HEK293 (cell line): ENCODE measurements at regions of chr5 and their contacts with region 1.

Region 1: DNA sequence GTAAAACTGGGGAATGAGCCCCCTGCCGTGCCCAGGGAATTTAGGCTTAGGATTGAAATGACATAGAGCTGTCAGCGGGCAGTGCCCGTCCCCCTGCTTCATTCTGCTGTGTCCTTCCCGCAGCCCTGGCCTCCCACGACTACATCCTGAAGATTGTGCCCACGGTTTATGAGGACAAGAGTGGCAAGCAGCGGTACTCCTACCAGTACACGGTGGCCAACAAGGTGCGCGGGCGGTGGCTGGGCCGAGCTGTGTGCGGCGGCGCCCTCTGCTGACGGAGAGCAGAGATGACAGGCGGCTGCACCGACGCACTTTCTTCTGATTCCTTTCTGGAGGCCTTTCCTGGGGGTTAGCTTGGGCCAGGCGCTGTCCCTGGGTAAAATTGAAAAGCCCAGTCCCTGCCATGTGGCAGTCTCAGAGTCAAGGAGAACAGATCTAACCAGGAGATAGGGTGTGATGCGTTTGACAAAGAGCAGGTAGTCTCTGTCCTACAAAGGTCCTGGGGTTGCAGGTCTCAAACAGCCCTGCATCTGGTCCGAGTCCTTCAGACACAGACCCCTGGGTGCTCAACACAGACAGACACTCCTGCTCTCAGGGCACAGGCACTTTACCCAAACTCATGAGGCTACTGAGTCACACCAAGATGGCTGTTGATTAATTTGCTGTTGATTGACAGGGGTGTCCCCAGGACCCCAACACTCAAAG is 26.8 kb upstream of the RPL26L1 start:
- H3K4me3 ChIP-seq: no peak overlapping the region
- H3K27ac ChIP-seq: no peak overlapping the region
- H3K4me1 ChIP-seq: no peaks in the 10 kb centered on the region
- CTCF ChIP-seq: peak; percentile 88

Region 2: GRCh38 chr5:172707285-172708182 is 224.9 kb before region 1 on chr5:
- CTCF ChIA-PET with region 1: interaction called, 214 read pairs
- POLR2A ChIA-PET with region 1: no interaction called
- H3K4me3 ChIP-seq: no peak overlapping the region
- H3K27ac ChIP-seq: no peak overlapping the region
- H3K4me1 ChIP-seq: no peaks in the 10 kb centered on the region; the same call in 1 of the 2 replicates
- CTCF ChIP-seq: peak; percentile 70; the same call in 1 of the 2 replicates

Region 3: DNA sequence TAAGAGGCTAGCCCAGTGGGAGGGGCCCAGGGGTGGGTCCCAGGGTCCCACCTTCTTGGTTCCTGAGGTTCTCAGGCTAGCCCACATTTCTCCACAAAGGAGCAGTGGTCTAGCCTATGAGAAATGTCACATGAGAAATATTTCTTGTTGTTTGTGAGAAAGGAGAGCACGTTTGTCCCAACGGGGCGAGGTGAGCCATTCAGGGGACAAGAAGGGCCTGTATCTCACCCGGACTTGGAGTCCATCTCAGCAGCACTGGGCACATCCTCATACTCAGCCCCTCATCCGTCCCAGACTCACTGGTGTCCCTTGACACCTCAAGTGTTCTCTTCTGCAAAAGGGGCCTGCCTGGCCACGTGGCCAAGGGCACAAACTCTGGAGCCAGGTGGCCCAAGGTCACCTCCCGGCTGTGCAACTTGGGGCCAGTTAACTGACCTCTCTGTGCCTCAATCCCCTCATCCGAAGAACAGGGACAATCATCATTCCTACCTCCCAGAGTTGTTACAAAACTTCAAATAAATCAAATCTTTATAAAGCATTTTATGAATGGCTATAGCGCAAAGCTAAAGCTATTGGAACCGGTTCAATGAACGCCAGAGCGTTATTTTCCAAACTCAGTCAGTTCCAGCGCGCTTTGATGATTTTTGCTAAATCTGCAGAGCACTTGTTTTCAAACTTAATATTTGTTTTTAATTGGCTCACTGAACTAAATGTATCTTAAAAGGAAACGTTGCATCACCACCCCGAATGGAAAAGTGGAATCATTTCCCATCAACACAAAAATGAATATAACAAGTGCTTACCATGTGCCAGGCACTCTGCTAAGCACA is 210.9 kb before region 1 on chr5:
- CTCF ChIA-PET with region 1: interaction called, 31 read pairs
- POLR2A ChIA-PET with region 1: no interaction called
- H3K4me3 ChIP-seq: no peak overlapping the region
- H3K27ac ChIP-seq: no peak overlapping the region
- H3K4me1 ChIP-seq: peaks cover 8% of the 10 kb centered on the region; the same call in 1 of the 2 replicates
- CTCF ChIP-seq: no peak

Region 4: DNA sequence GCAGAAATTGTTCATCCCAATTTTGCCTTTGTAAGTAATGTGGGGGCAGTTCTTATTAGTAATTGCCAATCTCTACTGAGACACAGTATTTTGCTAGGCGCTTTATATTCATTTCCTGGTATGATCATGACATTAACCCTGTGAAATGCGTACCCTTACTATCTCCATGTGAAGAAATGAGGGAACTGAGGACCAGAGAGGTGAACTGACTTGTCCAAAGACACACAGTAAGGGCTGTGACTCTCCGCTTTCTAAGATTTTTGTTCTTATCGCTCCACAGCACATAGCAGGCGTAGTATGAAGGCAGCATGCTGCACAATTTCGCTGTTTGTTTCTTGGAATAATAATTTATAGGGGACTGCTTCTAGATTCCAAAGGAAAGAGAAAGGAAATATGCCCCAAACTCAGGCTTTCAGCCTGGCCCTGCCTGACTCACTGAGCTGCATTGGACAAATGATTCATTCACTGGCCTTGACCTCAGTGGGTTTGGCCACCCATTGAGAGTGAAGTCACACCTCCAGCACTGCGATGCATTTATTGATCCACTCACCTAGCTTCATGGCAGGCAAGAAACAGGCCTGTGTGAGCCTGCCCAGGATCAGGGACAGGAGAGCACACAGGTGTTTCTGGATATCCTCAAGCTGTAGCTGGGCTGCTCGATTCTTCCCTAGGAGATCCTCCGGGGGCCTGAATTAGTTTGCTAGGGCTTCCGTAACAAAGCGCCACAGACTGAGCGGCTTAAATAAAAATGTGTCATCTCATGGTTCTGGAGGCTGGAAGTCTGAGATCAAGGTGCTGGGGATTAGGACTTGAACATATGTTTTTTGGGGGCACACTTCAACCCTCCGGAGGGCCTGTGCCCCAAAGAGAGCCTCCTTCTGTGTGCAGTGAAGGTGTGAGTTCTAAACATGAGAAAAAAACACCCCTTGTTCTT is 154.3 kb before region 1 on chr5:
- CTCF ChIA-PET with region 1: interaction called, 11 read pairs
- POLR2A ChIA-PET with region 1: no interaction called
- H3K4me3 ChIP-seq: no peak overlapping the region
- H3K27ac ChIP-seq: no peak overlapping the region
- H3K4me1 ChIP-seq: no peaks in the 10 kb centered on the region
- CTCF ChIP-seq: no peak

Region 5: GRCh38 chr5:172897481-172898217 is 34.8 kb before region 1 on chr5:
- CTCF ChIA-PET with region 1: interaction called, 10 read pairs
- POLR2A ChIA-PET with region 1: no interaction called
- H3K4me3 ChIP-seq: no peak overlapping the region
- H3K27ac ChIP-seq: no peak overlapping the region
- H3K4me1 ChIP-seq: no peaks in the 10 kb centered on the region
- CTCF ChIP-seq: no peak

Region 6: DNA sequence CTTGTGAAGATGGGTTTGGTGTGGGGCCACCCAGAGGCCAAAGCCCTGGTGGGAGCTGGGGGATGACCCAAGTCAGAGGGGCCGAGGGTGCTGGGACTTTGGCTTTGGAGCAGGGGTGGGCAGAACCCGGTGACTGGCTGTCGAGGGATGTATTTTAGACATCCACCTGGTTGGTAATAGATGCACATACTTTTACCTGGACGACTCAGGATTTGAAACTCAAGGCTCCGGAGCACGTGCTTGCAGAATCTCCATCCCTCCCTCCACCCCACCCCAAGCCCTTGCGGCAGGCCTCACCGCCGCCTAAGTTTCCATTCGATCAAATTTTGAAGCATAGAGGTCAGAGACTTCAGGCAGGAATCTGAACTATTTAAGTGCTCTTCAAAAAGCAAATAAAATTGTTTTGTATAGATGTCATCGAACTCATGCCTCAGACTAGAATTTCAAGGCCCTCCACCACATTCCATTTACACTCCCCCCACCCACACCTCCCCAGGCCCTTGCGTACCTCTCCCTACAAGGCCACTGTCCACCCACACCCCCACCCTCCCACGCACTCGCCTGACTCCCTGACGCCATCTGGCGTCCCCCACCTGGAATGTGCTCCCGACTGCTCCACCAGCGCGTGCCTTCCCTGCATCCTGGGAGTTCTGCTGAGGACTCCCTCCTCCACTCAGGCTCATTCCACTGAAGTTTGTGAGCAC is 29.8 kb before region 1 on chr5:
- CTCF ChIA-PET with region 1: interaction called, 20 read pairs
- POLR2A ChIA-PET with region 1: no interaction called
- H3K4me3 ChIP-seq: no peak overlapping the region
- H3K27ac ChIP-seq: no peak overlapping the region
- H3K4me1 ChIP-seq: peaks cover 14% of the 10 kb centered on the region; the same call in 1 of the 2 replicates
- CTCF ChIP-seq: peak; percentile 40

Region 7: GRCh38 chr5:172984243-172984953 is 51.9 kb after region 1 on chr5:
- CTCF ChIA-PET with region 1: no interaction called
- POLR2A ChIA-PET with region 1: no interaction called
- H3K4me3 ChIP-seq: peak overlapping the region; percentile 87
- H3K27ac ChIP-seq: peak overlapping the region; percentile 67
- H3K4me1 ChIP-seq: no peaks in the 10 kb centered on the region; the same call in 1 of the 2 replicates
- CTCF ChIP-seq: peak; percentile 62; the same call in 1 of the 2 replicates

Region 8: DNA sequence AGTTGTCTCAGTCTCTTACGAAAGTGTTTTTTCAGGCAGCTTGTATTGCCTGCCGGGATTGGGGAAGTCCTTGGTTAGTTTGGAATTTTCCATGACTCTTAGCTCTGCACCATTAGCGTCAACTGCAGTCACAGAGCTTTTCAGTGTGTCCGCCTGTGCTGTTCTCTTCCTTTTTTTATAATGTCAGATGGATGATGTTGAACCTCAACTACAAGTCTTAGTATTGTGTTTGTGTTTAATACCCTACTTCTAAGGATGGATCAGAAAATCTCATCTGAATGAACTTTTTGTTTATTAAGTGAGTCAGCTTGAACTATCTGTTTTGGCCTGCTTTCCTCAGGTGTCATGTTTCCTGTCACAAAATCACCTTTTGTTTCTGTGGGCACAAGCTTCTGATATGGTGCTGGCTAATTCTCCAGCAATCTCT is 84.2 kb after region 1 on chr5:
- CTCF ChIA-PET with region 1: no interaction called
- POLR2A ChIA-PET with region 1: no interaction called
- H3K4me3 ChIP-seq: no peak overlapping the region
- H3K27ac ChIP-seq: no peak overlapping the region
- H3K4me1 ChIP-seq: peaks cover 9% of the 10 kb centered on the region
- CTCF ChIP-seq: no peak

Region 9: GRCh38 chr5:173057062-173057924 is 124.8 kb after region 1 on chr5:
- CTCF ChIA-PET with region 1: no interaction called
- POLR2A ChIA-PET with region 1: no interaction called
- H3K4me3 ChIP-seq: peak overlapping the region; percentile 99
- H3K27ac ChIP-seq: peak overlapping the region; percentile 61
- H3K4me1 ChIP-seq: peaks cover 4% of the 10 kb centered on the region; the same call in 1 of the 2 replicates
- CTCF ChIP-seq: peak; percentile 35; the same call in 1 of the 2 replicates